ENCODE measurements at regions of chr3 and their contacts with region 1.

Region 1: GRCh38 chr3:46488735-46489361 is 8.9 kb upstream of the RTP3 start:
- DNase-seq: peak; percentile 77 to 94
- H3K4me3 ChIP-seq: no peak overlapping the region
- H3K27ac ChIP-seq: no peak overlapping the region
- H3K4me1 ChIP-seq: 0 out of 2 replicates have a peak, but pooled peaks cover 4% of the 10 kb centered on the region
- H3K27me3 ChIP-seq: no peaks in the 10 kb centered on the region
- CTCF ChIP-seq: peak; percentile 94

Region 2: GRCh38 chr3:46442576-46443562 is 46.0 kb before region 1 on chr3:
- CTCF ChIA-PET with region 1: no interaction called
- POLR2A ChIA-PET with region 1: no interaction called
- intact Hi-C with region 1: no loop called
- DNase-seq: peak; percentile 46 to 60
- H3K4me3 ChIP-seq: no peak overlapping the region
- H3K27ac ChIP-seq: no peak overlapping the region
- H3K4me1 ChIP-seq: peaks cover 8% of the 10 kb centered on the region; the same call in 1 of the 2 replicates
- H3K27me3 ChIP-seq: no peaks in the 10 kb centered on the region
- CTCF ChIP-seq: peak; percentile 77

Region 3: GRCh38 chr3:46517016-46517793 is 28.4 kb after region 1 on chr3:
- CTCF ChIA-PET with region 1: interaction called, 7 read pairs
- POLR2A ChIA-PET with region 1: no interaction called
- intact Hi-C with region 1: loop called (anchors 2 kb)
- DNase-seq: peak; percentile 62 to 93
- H3K4me3 ChIP-seq: no peak overlapping the region
- H3K27ac ChIP-seq: peak overlapping the region; percentile 75
- H3K4me1 ChIP-seq: peaks cover 26% of the 10 kb centered on the region
- H3K27me3 ChIP-seq: no peaks in the 10 kb centered on the region
- CTCF ChIP-seq: no peak

Region 4: DNA sequence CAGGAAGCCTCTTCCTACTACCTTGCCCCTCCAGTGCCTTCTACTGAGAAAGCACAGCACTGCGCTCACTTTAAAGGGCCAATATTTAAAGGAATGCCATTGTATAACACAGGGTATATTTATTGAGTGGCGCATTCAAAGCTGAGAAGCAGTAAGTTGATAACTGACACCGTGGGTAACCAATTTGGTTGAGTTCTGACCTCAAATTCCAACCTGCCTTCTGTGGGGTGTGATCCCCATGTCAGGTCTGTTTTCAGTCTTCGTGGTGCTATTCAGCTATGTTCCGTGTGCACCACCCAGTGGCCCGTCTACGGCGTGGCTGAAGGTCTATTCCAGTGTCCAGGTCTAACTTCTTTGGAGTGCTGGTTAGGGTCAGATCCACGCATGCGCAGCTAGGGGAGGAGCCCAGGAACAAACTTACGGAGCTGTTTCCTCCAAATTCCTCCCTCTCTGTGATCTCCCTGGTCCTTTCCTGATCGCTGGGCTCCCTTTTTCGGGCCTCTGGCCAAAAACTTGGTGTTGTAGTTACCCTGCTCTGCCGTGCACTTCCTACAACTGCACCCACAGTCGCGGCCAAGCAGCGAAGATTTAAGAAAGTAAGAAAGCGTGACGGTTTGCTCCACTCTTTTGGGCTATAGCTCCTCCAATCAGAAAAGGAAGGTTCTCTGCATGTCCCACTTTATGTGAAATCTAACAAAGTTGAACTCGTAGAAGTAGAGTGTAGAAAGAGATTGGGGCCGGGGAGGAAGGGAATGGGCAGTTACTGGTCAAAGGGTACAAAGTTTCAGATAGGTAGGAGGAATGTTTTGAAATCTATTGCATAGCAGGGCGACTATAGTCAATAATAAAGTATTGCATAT is 69.6 kb after region 1 on chr3:
- CTCF ChIA-PET with region 1: interaction called, 46 read pairs
- POLR2A ChIA-PET with region 1: no interaction called
- intact Hi-C with region 1: loop called (anchors 1 kb)
- DNase-seq: peak; percentile 84 to 89
- H3K4me3 ChIP-seq: peak overlapping the region; percentile 53; the same call in 1 of the 2 replicates
- H3K27ac ChIP-seq: 0 out of 2 replicates have a peak overlapping the region, but pooled peaks have one; percentile 22
- H3K4me1 ChIP-seq: 0 out of 2 replicates have a peak, but pooled peaks cover 4% of the 10 kb centered on the region
- H3K27me3 ChIP-seq: no peaks in the 10 kb centered on the region
- CTCF ChIP-seq: peak; percentile 64

Region 5: DNA sequence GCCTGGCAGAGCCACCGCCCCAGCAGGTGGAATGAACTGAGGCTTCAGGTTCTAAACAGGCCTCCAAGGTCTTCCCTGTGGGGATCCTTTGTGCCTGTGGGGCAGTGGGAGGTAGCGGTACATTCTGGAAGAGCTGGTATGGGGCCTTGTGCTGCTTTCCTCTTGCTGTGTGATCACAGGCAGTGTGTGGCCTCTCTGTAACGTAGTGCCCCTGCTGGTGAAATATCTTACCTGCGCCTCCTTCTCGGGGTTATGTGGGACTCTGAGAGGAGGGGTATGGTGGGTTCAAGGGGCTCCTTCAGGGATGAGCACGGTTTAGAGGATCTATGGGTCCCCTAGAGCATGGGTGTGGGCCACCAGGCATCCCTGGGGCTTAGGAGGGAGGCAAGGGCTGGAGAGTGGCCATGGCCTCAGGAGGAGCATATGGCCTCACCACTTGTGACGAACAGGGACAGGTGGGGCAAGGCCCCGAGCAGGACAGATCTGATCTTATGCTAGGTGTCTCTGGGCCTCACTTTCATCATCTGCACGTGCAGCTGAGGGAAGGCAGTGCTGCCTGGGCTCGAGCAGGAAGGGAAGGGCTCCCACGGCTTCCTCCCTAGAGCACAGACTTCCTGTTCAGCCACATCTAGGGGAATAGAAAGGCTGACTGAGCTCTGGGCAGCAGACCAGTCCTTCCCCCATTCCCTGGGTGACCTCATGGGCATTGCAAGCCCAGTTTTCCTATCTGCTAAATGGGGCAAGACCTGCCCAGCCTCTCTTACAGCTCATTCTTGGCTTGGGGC is 206.5 kb after region 1 on chr3:
- CTCF ChIA-PET with region 1: interaction called, 4 read pairs
- POLR2A ChIA-PET with region 1: no interaction called
- intact Hi-C with region 1: loop called (anchors 10 kb)
- DNase-seq: no peak
- H3K4me3 ChIP-seq: no peak overlapping the region
- H3K27ac ChIP-seq: no peak overlapping the region
- H3K4me1 ChIP-seq: peaks cover 31% of the 10 kb centered on the region
- H3K27me3 ChIP-seq: no peaks in the 10 kb centered on the region
- CTCF ChIP-seq: peak; percentile 56

Measured in PC-9 (cell line).